Caco-2 (cell line): ENCODE measurements at regions of chr10 and their contacts with region 1.

Region 1: GRCh38 chr10:128150045-128150493 is 23.8 kb upstream of the MKI67 start:
- DNase-seq: peak; percentile 67 to 84
- H3K4me3 ChIP-seq: peak overlapping the region; percentile 53
- H3K4me3 Mint-ChIP-seq: peak overlapping the region; percentile 70
- H3K27ac Mint-ChIP-seq: no peak overlapping the region
- H3K4me1 ChIP-seq: no peaks in the 10 kb centered on the region
- H3K4me1 Mint-ChIP-seq: no peaks in the 10 kb centered on the region
- H3K27me3 ChIP-seq: no peaks in the 10 kb centered on the region
- H3K27me3 Mint-ChIP-seq: peaks cover 3% of the 10 kb centered on the region
- CTCF ChIP-seq: peak; percentile 83 to 91

Region 2: DNA sequence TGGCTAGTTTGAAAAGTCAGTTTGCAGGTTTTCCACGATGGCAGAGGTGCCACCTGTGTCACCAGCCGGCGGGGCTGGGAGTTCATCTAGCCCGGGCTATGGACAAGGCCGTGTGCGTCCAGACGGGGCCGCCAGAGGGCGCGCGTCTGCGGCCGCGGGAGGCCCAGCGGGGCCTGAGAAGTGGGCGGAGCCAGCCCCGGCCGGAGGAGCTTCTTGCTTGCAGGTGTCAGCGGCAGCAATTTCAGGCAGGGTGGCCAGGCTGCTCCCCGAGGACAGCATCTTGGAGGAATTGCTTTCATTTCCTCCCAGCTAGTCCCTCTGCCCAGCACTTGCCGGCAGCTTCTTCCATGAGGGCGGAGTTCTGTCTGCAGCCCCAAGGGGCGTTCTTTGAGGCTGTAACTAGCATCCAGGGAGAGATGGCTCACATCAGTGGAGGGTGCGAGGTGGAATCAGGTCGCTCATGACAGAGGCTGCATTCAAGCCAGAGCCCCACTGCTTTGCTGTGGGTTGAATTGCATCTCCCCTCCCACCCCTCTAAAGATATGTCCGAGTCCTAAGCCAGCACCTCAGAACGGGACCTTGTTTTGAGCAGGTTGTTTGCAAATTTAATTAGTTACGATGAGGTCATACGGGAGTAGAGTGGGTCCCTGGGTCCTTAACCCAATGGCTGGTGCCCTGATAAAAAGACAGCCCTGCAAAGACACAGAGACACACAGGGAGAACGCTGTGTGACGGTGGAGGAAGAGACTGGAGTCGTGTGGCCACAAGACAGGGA is 62.1 kb after region 1 on chr10:
- CTCF ChIA-PET with region 1: no interaction called
- POLR2A ChIA-PET with region 1: no interaction called
- intact Hi-C with region 1: loop called (anchors 2 kb)
- DNase-seq: peak; percentile 78 to 89
- H3K4me3 ChIP-seq: peak overlapping the region; percentile 9; the same call in 1 of the 2 replicates
- H3K4me3 Mint-ChIP-seq: peak overlapping the region; percentile 58
- H3K27ac Mint-ChIP-seq: no peak overlapping the region
- H3K4me1 ChIP-seq: no peaks in the 10 kb centered on the region
- H3K4me1 Mint-ChIP-seq: no peaks in the 10 kb centered on the region
- H3K27me3 ChIP-seq: no peaks in the 10 kb centered on the region; the same call in none of the 2 replicates
- H3K27me3 Mint-ChIP-seq: peaks cover 25% of the 10 kb centered on the region
- CTCF ChIP-seq: peak; percentile 91 to 95